ENCODE measurements at regions of chr5 and their contacts with region 1.

Region 1: DNA sequence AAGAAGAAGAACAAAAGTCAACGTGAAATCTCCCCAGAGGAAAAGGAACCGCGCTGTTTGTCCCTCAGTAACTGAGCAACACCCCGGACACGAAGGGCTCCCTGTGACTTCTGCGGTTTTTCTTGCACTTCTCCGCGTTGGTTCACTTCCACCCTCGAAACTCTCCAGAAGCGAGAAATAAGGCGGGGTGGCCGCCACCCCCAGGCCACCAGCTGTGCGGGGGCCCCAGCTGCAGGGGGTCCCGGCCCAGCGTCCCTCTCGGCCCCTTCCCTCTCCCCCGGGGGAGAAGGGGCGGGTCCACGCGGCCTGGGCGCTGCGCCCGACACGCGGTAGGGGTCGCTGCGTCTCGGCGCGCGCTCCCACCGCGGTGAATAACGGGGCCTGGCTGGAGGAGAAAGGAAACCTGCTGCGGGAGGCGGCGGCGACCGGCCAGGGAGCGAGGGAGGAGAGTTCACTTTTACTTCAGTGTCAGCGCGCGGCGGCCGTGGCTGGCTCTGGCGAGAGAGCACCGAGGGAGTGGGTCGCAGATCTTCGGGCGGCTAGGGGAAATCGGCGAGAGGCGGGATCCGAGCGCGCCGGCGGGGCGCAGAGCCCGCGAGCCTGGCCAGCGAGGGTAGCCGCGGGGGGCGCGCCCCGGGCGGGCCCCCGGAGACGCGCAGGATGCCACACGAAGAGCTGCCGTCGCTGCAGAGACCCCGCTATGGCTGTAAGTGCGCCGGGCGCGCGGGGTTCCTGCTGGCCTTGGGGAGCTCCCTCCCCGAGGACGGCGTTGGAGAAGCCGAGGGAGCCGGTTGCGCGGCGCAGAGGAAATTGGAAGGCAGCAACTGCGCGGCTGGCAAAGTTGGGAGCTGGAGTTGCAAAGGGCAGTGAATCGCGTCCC is at the start of gene IQGAP2:
- DNase-seq: peak; percentile 23 to 37
- ATAC-seq: no peak
- H3K4me3 ChIP-seq: peak within 1 kb of the TSS; percentile 43 to 63 (median 56)
- H3K27ac ChIP-seq: peak within 1 kb of the TSS in 2 of 4 donors; percentile 14 to 18
- H3K4me1 ChIP-seq: peaks cover 0 to 8% of the 10 kb centered on the region in 2 donors
- H3K27me3 ChIP-seq: peaks cover 20 to 25% (median 20%) of the 10 kb centered on the region in 3 donors
- CTCF ChIP-seq: peak in 2 of 5 experiments; percentile 14 to 35
- POLR2A ChIP-seq: peak in 1 of 2 donors; percentile 17
- total RNA-seq, gene IQGAP2: 1.5 to 6.8 (median 2.5) TPM

Region 2: DNA sequence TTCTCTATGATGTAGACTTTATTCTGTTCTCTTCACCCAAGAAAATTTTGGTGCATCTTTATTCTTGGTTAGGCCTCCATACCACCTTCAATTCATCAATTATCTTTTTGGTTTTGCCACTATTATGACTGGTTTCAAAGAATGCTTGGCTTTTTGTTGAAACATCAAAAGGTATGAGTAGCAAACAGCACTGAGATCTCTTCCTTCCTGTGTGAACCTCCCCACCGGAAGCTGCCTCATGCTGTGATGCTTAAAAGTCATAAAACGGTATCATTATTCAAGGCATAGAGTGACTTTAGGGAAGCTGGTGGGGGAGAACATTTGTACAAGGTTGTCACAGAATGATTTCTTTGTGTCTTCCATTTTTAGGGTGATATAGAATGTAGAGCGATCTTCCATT is 70.5 kb after region 1 on chr5:
- in situ Hi-C with region 1: no loop called
- intact Hi-C with region 1: no loop called
- DNase-seq: no peak
- ATAC-seq: no peak
- H3K4me3 ChIP-seq: no peak overlapping the region
- H3K27ac ChIP-seq: no peak overlapping the region
- H3K4me1 ChIP-seq: no peaks in the 10 kb centered on the region
- H3K27me3 ChIP-seq: no peaks in the 10 kb centered on the region
- CTCF ChIP-seq: no peak
- POLR2A ChIP-seq: no peak

Region 3: GRCh38 chr5:76582230-76583162 is 179.4 kb after region 1 on chr5:
- in situ Hi-C with region 1: no loop called
- intact Hi-C with region 1: loop called (anchors 5 kb)
- DNase-seq: no peak
- ATAC-seq: no peak
- H3K4me3 ChIP-seq: no peak overlapping the region
- H3K27ac ChIP-seq: no peak overlapping the region
- H3K4me1 ChIP-seq: no peaks in the 10 kb centered on the region
- H3K27me3 ChIP-seq: no peaks in the 10 kb centered on the region
- CTCF ChIP-seq: no peak
- POLR2A ChIP-seq: no peak